Right lobe of liver (tissue), 6 donors: ENCODE measurements at regions of chr12 and their contacts with region 1.

Region 1: GRCh38 chr12:70849265-70849960 is 71.1 kb downstream of the PTPRR start:
- DNase-seq: no peak
- ATAC-seq: peak in 1 of 4 donors; percentile 22
- H3K4me3 ChIP-seq: no peak overlapping the region
- H3K27ac ChIP-seq: no peak overlapping the region
- H3K4me1 ChIP-seq: peaks cover 0 to 22% (median 0%) of the 10 kb centered on the region in 4 donors
- H3K27me3 ChIP-seq: no peaks in the 10 kb centered on the region
- CTCF ChIP-seq: peak; percentile 37 to 55 (median 38)
- POLR2A ChIP-seq: no peak

Region 2: DNA sequence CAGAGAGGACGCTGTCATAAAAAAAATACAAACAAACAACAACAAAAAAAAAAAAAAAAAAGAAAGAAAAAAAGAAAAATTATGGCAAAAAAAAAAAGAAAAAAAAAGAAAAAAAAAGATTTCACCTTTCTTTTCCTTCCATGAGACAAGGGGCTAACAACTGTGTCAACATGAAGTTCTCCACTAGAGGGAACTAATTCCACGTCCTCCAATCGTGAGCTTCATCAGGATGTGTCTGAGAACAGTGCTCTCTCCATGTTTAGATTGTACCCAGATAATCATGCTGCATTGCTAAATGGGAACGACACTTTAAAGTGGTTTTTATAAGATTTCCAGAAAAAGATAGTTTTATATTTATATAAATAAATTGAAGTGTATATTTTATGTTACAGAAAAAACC is 116.0 kb before region 1 on chr12:
- intact Hi-C with region 1: loop called in 1 of 2 experiments (anchors 10 kb)
- DNase-seq: no peak
- ATAC-seq: peak; percentile 88 to 92 (median 89)
- H3K4me3 ChIP-seq: no peak overlapping the region
- H3K27ac ChIP-seq: no peak overlapping the region
- H3K4me1 ChIP-seq: peaks cover 0 to 2% (median 0%) of the 10 kb centered on the region in 4 donors
- H3K27me3 ChIP-seq: no peaks in the 10 kb centered on the region
- CTCF ChIP-seq: peak; percentile 51 to 77 (median 68)
- POLR2A ChIP-seq: no peak